ENCODE measurements at regions of chr17 and their contacts with region 1.

Region 1: GRCh38 chr17:78708510-78708973 is 73.5 kb downstream of the CYTH1 start:
- DNase-seq: no peak
- ATAC-seq: peak; percentile 75
- H3K4me3 ChIP-seq: peak overlapping the region; percentile 24; the same call in 1 of the 2 replicates
- H3K27ac ChIP-seq: peak overlapping the region; percentile 99
- H3K4me1 ChIP-seq: peaks cover 60% of the 10 kb centered on the region
- H3K27me3 ChIP-seq: no peaks in the 10 kb centered on the region
- CTCF ChIP-seq: peak; percentile 81 to 87 (median 87)
- EP300 ChIP-seq: no peak
- POLR2A ChIP-seq: 0 out of 2 replicates have a peak, but pooled peaks have one; percentile 29
- RAD21 ChIP-seq: peak; percentile 88

Region 2: GRCh38 chr17:78689029-78689428 is 19.5 kb before region 1 on chr17:
- CTCF ChIA-PET with region 1: interaction called, 69 read pairs
- POLR2A ChIA-PET with region 1: interaction called, 4 read pairs
- RAD21 ChIA-PET with region 1: interaction called, 8 read pairs
- SMC1A ChIA-PET with region 1: interaction called, 98 read pairs
- in situ Hi-C with region 1: no loop called
- intact Hi-C with region 1: loop called (anchors 1 kb)
- DNase-seq: no peak
- ATAC-seq: peak; percentile 63
- H3K4me3 ChIP-seq: no peak overlapping the region
- H3K27ac ChIP-seq: no peak overlapping the region
- H3K4me1 ChIP-seq: peaks cover 26% of the 10 kb centered on the region
- H3K27me3 ChIP-seq: no peaks in the 10 kb centered on the region
- CTCF ChIP-seq: peak; percentile 20 to 46 (median 28); a peak in 4 of 6 replicates
- EP300 ChIP-seq: no peak
- POLR2A ChIP-seq: no peak; the same call in 1 of the 2 replicates
- RAD21 ChIP-seq: peak; percentile 24; the same call in 1 of the 2 replicates

Region 3: GRCh38 chr17:78723001-78723796 is 14.7 kb after region 1 on chr17:
- CTCF ChIA-PET with region 1: interaction called, 56 read pairs
- POLR2A ChIA-PET with region 1: interaction called, 384 read pairs
- RAD21 ChIA-PET with region 1: interaction called, 537 read pairs
- SMC1A ChIA-PET with region 1: interaction called, 490 read pairs
- in situ Hi-C with region 1: no loop called
- intact Hi-C with region 1: no loop called
- DNase-seq: no peak
- ATAC-seq: no peak
- H3K4me3 ChIP-seq: peak overlapping the region; percentile 56
- H3K27ac ChIP-seq: peak overlapping the region; percentile 74
- H3K4me1 ChIP-seq: peaks cover 90% of the 10 kb centered on the region
- H3K27me3 ChIP-seq: no peaks in the 10 kb centered on the region
- CTCF ChIP-seq: no peak
- EP300 ChIP-seq: no peak
- POLR2A ChIP-seq: peak; percentile 30; the same call in 1 of the 2 replicates
- RAD21 ChIP-seq: no peak

Region 4: DNA sequence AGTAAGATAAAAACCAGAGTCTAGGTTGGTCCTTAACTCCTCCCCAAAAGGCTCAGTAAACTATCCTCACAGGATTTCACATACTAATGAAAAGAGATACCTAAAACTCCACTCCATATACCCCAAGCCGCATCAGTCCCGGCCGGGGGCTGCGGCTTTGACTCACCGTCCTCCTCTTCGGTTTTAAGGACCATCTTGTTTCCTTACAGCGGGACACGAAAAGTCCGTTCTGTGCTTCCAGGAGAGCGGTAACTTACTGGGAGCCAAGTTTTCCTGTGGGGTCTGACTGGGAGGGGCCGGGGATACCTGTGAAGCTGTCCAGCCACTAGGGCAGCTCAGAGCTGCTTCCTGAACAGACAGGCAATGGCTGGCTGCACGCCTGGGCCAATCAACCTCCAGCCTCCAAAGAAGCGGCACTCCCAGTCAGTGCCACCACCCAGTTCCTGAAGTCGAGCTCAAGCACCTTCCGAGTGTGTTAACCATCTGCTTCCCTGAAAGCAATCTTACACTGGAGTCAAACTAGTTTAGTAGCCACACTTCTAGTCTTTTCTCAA is 28.1 kb after region 1 on chr17:
- CTCF ChIA-PET with region 1: interaction called, 85 read pairs
- POLR2A ChIA-PET with region 1: interaction called, 384 read pairs
- RAD21 ChIA-PET with region 1: interaction called, 537 read pairs
- SMC1A ChIA-PET with region 1: interaction called, 490 read pairs
- in situ Hi-C with region 1: no loop called
- intact Hi-C with region 1: loop called (anchors 2 kb)
- DNase-seq: no peak
- ATAC-seq: peak; percentile 77
- H3K4me3 ChIP-seq: peak overlapping the region; percentile 84
- H3K27ac ChIP-seq: peak overlapping the region; percentile 92
- H3K4me1 ChIP-seq: peaks cover 49% of the 10 kb centered on the region
- H3K27me3 ChIP-seq: no peaks in the 10 kb centered on the region
- CTCF ChIP-seq: peak in 2 of 3 experiments; percentile 12 to 23; a peak in 2 of 6 replicates
- EP300 ChIP-seq: no peak
- POLR2A ChIP-seq: peak; percentile 78
- RAD21 ChIP-seq: no peak

Region 5: GRCh38 chr17:78769196-78769773 is 60.7 kb after region 1 on chr17:
- CTCF ChIA-PET with region 1: interaction called, 15 read pairs
- POLR2A ChIA-PET with region 1: interaction called, 11 read pairs
- RAD21 ChIA-PET with region 1: interaction called, 12 read pairs
- SMC1A ChIA-PET with region 1: interaction called, 8 read pairs
- in situ Hi-C with region 1: no loop called
- intact Hi-C with region 1: no loop called
- DNase-seq: no peak
- ATAC-seq: peak; percentile 54
- H3K4me3 ChIP-seq: no peak overlapping the region
- H3K27ac ChIP-seq: peak overlapping the region; percentile 53
- H3K4me1 ChIP-seq: peaks cover 66% of the 10 kb centered on the region
- H3K27me3 ChIP-seq: no peaks in the 10 kb centered on the region
- CTCF ChIP-seq: peak; percentile 36 to 45 (median 45)
- EP300 ChIP-seq: no peak
- POLR2A ChIP-seq: peak; percentile 54; the same call in 1 of the 2 replicates
- RAD21 ChIP-seq: 0 out of 2 replicates have a peak, but pooled peaks have one; percentile 20

Region 6: DNA sequence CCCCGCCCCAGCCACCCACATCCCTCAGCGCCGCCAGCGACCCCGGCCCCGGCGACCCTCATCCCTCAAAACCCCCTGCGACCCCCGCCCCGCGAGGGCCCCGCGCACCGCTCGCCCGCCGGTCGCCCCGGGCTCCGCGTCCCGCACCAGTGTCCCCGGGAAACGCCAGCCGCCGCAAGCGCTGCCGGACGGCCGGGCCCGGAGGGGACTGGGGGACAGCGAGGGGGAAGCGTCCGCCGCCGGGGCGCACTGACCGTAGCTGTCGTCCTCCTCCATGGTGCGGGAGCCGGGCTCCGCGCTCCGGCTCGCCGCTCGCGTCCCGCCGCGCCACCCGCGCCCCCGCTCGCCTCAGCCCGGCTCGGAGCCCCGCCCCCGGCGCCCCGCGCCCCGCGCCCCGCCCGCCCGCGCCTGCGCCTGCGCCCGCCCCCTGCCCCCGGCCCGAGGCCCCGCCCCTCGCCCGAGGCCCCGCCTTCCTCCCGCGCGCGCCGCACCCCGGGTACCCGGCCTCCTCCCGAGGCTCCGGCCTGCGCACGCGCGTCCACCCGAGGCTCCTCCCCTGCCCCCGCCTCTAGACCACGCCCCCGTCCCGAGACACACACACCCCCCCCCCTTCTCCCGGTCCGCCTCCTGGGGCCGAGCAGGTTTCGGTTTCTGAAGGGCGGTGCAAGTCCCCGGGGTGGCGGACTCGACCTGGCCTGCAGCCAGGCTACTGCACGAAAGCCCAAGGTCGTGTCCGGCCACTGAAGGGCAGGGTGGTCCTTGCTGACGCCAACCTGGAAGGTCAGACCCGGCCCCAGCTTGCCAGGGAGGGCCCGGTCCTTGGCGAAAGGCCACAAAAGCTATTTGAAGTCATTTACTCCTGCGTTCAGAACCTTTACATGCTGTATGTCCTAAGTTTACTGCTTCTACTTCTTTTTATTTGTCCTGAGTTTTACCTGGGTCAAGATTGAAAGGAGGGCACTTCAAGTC is 73.7 kb after region 1 on chr17 and contains the start of gene CYTH1:
- CTCF ChIA-PET with region 1: no interaction called
- POLR2A ChIA-PET with region 1: interaction called, 4 read pairs
- RAD21 ChIA-PET with region 1: interaction called, 17 read pairs
- SMC1A ChIA-PET with region 1: interaction called, 11 read pairs
- in situ Hi-C with region 1: no loop called
- intact Hi-C with region 1: loop called (anchors 2 kb)
- DNase-seq: no peak
- ATAC-seq: peak; percentile 54
- H3K4me3 ChIP-seq: peak within 1 kb of the TSS; percentile 89
- H3K27ac ChIP-seq: peak within 1 kb of the TSS; percentile 97
- H3K4me1 ChIP-seq: peaks cover 6% of the 10 kb centered on the region; the same call in 1 of the 2 replicates
- H3K27me3 ChIP-seq: no peaks in the 10 kb centered on the region
- CTCF ChIP-seq: no peak
- EP300 ChIP-seq: no peak
- POLR2A ChIP-seq: peak; percentile 85
- RAD21 ChIP-seq: 0 out of 2 replicates have a peak, but pooled peaks have one; percentile 1
- polyA plus RNA-seq, gene CYTH1: 6.6 to 11.8 TPM

Measured in GM12878 (cell line).